CD4-positive, alpha-beta memory T cell (primary cell): ENCODE measurements at regions of chrX and their contacts with region 1.

Region 1: DNA sequence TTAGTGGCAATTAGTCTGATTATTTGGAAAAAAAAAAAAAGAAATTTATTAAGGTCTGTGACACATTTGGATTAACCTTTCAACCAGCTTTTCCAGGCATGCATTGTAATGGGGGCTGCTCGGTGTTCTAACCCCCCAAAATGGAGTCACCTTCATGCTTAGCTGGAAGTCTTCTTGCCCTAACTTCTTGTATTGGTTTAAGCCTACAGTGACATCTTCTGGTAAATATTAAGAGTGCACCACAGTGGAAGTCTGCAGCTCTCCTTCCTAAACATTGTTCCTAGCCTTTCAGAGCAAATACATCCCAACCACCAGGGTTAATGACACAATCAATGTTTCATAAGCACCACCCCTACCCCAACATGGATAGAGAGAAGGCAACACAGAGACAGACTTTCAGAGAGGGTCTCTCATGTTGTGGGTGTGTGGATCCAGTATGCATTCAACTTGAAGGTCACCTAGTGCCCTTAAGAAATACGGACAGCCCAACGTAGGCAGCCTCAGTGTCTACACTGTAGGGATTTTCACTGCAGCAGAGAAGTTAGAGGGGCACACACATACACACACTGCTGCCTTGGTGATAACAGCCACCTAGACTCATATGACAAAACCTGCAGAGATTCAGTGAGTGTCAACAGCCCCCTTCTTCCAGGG is 142.9 kb upstream of the MBNL3 start:
- DNase-seq: peak in 4 of 5 donors; percentile 18 to 37 (median 26)
- H3K4me3 ChIP-seq: no peak overlapping the region
- H3K4me3 Mint-ChIP-seq: no peak overlapping the region
- H3K27ac ChIP-seq: no peak overlapping the region
- H3K27ac Mint-ChIP-seq: no peak overlapping the region
- H3K4me1 ChIP-seq: no peaks in the 10 kb centered on the region
- H3K4me1 Mint-ChIP-seq: peaks cover 0 to 2% (median 0%) of the 10 kb centered on the region in 4 donors
- H3K27me3 ChIP-seq: no peaks in the 10 kb centered on the region
- H3K27me3 Mint-ChIP-seq: peaks cover 0 to 3% of the 10 kb centered on the region in 2 donors

Region 2: DNA sequence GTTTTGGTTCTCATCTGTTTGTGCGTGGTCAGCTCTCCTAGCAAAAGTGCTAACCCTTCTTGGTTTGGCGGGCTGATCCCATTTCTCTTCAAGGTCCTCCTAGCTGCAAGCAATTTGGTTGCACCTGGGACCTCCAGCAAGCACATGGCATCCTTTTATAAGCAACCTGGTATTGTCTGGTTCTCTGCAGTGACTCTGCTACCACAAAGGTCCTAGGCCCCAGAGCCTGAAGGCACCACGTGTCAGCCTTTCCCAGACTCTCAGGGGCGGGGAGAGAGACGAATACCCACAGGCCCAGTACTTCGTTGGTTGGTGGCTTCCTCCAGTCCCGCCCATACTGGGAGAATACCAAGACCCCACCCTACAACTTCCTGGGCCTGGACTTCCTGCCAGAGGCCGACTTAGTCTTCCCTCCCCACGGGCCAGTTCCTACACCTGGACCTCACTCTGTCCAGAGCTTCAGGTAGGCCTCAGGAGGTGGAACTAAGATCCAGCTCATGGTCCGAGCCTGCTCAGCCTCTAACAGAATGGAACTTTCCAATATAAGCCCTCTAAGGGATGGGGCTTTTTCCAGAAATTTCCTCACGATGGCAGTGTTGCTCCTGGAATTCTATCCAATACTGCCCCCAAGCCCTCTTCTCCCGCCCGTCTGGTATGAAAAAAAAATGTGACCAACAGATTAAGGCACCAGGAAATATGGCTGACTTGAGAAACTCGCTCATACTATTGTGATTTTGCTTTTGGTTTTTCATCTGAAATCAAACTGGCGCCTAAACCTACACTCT is 801.1 kb before region 1 on chrX:
- CTCF ChIA-PET with region 1: interaction called, 10 read pairs
- POLR2A ChIA-PET with region 1: no interaction called
- intact Hi-C with region 1: no loop called
- DNase-seq: peak; percentile 48 to 76 (median 65)
- H3K4me3 ChIP-seq: peak overlapping the region in 1 of 2 donors; percentile 5
- H3K4me3 Mint-ChIP-seq: peak overlapping the region in 7 of 8 donors; percentile 1 to 79 (median 54)
- H3K27ac ChIP-seq: no peak overlapping the region
- H3K27ac Mint-ChIP-seq: peak overlapping the region; percentile 20 to 88 (median 42)
- H3K4me1 ChIP-seq: peaks cover 29% of the 10 kb centered on the region
- H3K4me1 Mint-ChIP-seq: peaks cover 8 to 35% (median 17%) of the 10 kb centered on the region in 4 donors
- H3K27me3 ChIP-seq: no peaks in the 10 kb centered on the region
- H3K27me3 Mint-ChIP-seq: no peaks in the 10 kb centered on the region

Region 3: GRCh38 chrX:131841496-131842410 is 790.0 kb before region 1 on chrX:
- CTCF ChIA-PET with region 1: interaction called, 11 read pairs
- POLR2A ChIA-PET with region 1: no interaction called
- intact Hi-C with region 1: loop called (anchors 1 kb)
- DNase-seq: peak in 4 of 5 donors; percentile 50 to 65 (median 52)
- H3K4me3 ChIP-seq: no peak overlapping the region
- H3K4me3 Mint-ChIP-seq: peak overlapping the region in 1 of 8 donors; percentile 16
- H3K27ac ChIP-seq: no peak overlapping the region
- H3K27ac Mint-ChIP-seq: peak overlapping the region in 1 of 7 donors; percentile 12
- H3K4me1 ChIP-seq: no peaks in the 10 kb centered on the region
- H3K4me1 Mint-ChIP-seq: peaks cover 0 to 8% (median 5%) of the 10 kb centered on the region in 4 donors
- H3K27me3 ChIP-seq: no peaks in the 10 kb centered on the region
- H3K27me3 Mint-ChIP-seq: no peaks in the 10 kb centered on the region

Region 4: DNA sequence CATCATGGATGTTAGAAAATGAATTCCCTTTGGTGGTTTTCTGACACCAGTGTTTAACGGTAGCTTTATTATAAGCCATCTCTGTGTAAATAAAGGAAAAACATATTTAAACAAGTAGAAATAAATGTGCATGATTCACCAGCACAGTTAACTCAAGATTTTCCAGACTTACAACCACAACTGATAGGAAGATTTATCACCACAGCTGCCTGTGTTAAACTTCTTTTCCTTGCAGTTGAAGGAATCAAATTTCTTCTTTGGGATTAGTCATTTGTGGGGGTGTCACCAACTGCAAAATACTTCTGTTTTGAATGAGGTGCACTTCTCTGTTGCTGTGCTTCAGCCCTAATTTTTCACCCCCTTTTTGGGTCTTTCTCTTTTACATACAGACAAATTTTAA is 736.7 kb before region 1 on chrX:
- CTCF ChIA-PET with region 1: no interaction called
- POLR2A ChIA-PET with region 1: no interaction called
- intact Hi-C with region 1: no loop called
- DNase-seq: no peak
- H3K4me3 ChIP-seq: no peak overlapping the region
- H3K4me3 Mint-ChIP-seq: no peak overlapping the region
- H3K27ac ChIP-seq: no peak overlapping the region
- H3K27ac Mint-ChIP-seq: no peak overlapping the region
- H3K4me1 ChIP-seq: no peaks in the 10 kb centered on the region
- H3K4me1 Mint-ChIP-seq: no peaks in the 10 kb centered on the region
- H3K27me3 ChIP-seq: no peaks in the 10 kb centered on the region
- H3K27me3 Mint-ChIP-seq: no peaks in the 10 kb centered on the region

Region 5: DNA sequence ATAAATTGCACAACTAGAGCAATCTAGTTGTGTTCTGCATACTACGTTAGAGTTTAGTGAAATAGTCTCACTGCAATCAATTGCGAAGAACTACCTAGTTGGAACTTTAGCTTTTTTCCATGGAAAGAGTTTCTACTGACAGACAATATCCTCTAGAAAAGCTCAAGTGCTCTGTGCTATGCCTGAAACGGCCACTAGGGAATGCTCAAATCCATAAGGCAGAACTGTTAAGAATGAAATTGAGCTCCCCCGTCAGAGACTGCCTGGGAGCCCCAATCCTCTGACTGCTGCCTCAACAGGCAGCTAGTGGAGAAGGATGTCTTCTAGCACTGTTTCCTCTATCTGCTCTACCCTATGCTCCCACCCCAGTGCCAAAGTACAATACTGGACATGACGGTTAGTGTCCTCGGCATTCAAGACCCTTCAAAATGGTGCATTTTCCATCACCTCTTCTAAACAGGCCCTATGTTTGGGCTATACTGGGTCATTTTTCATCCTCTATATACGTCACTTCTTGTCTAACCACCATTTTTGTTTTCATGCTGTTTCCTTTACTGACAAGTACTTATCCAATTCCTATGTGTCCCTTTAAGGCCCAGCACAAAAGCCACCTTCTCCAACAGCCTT is 539.2 kb before region 1 on chrX:
- CTCF ChIA-PET with region 1: interaction called, 3 read pairs
- POLR2A ChIA-PET with region 1: no interaction called
- intact Hi-C with region 1: loop called (anchors 1 kb)
- DNase-seq: peak; percentile 39 to 50 (median 42)
- H3K4me3 ChIP-seq: no peak overlapping the region
- H3K4me3 Mint-ChIP-seq: peak overlapping the region in 1 of 8 donors; percentile 11
- H3K27ac ChIP-seq: no peak overlapping the region
- H3K27ac Mint-ChIP-seq: peak overlapping the region in 1 of 7 donors; percentile 41
- H3K4me1 ChIP-seq: no peaks in the 10 kb centered on the region
- H3K4me1 Mint-ChIP-seq: peaks cover 0 to 5% (median 2%) of the 10 kb centered on the region in 4 donors
- H3K27me3 ChIP-seq: no peaks in the 10 kb centered on the region
- H3K27me3 Mint-ChIP-seq: peaks cover 3% of the 10 kb centered on the region in 2 donors

Region 6: DNA sequence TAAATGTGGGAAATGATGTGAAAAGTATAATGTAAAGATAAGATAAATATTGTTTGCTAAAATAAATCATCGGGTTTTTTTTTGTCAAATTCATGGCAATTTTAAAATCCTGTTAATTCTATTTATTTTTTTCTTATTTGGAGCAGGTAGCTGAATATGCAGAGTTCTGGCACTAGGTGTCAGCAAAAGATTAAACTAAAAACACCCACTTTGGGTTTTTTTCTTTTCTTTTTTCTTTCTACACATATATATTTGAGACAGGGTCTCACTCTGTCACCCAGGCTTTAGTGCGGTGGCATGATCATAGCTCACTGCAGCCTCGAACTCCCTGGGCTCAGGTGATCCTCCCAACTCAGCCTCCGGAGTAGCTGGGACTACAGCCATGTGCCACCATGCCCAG is 405.5 kb before region 1 on chrX:
- CTCF ChIA-PET with region 1: interaction called, 3 read pairs
- POLR2A ChIA-PET with region 1: no interaction called
- intact Hi-C with region 1: loop called (anchors 1 kb)
- DNase-seq: peak in 1 of 5 donors; percentile 9
- H3K4me3 ChIP-seq: no peak overlapping the region
- H3K4me3 Mint-ChIP-seq: no peak overlapping the region
- H3K27ac ChIP-seq: no peak overlapping the region
- H3K27ac Mint-ChIP-seq: no peak overlapping the region
- H3K4me1 ChIP-seq: no peaks in the 10 kb centered on the region
- H3K4me1 Mint-ChIP-seq: peaks cover under 1 to 6% (median 3%) of the 10 kb centered on the region in 4 donors
- H3K27me3 ChIP-seq: no peaks in the 10 kb centered on the region
- H3K27me3 Mint-ChIP-seq: no peaks in the 10 kb centered on the region